ENCODE measurements at regions of chr15 and their contacts with region 1.

Region 1: GRCh38 chr15:89070197-89071124 is 17.8 kb upstream of the ABHD2 start:
- DNase-seq: no peak
- H3K4me3 ChIP-seq: no peak overlapping the region
- CTCF ChIP-seq: no peak

Region 2: DNA sequence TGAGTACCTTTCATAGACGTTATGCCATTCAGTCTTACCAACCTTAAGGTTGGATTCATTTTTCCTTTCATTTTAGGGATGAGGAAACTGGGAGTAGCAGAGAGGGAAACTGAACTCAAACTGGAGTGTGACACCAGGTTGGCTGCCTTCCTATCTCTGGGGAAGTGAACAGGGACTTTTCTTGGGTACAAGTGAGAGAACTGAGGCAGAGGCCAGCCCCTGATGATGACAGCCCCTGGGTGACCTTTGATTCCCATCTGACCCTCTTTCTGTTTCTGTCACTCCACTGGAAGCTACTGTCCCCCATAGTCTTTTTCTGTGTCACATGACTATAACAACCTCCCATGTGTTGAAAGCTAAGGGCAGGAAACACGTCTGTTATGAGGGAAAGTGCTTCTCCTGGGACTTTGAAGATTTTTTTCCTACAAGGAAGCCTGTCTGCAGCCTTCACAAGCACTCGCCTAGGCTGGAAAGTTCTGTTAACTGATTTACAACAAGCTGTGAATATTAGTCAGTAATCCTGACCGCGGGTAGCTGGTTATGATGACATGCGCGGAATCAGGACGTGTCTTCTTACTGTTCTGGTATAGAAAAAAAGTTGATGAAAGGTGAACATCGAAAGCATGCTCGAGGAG is 49.1 kb after region 1 on chr15:
- in situ Hi-C with region 1: loop called (anchors 5 kb)
- DNase-seq: no peak
- H3K4me3 ChIP-seq: no peak overlapping the region
- CTCF ChIP-seq: no peak

Region 3: GRCh38 chr15:89150762-89151664 is 80.6 kb after region 1 on chr15:
- in situ Hi-C with region 1: no loop called
- DNase-seq: no peak
- H3K4me3 ChIP-seq: no peak overlapping the region
- CTCF ChIP-seq: no peak